Activated CD8-positive, alpha-beta T cell treated with anti-CD3 and anti-CD28 coated beads, Interleukin-2, amount 10 ng/mL, durations not matched to agents 7 days and 5 days (primary cell): ENCODE measurements at regions of chr6 and their contacts with region 1.

Region 1: GRCh38 chr6:36885461-36886401 is at the start of gene C6orf89:
- DNase-seq: peak; percentile 99
- ATAC-seq: peak; percentile 100
- H3K4me3 Mint-ChIP-seq: peak within 1 kb of the TSS; percentile 91
- H3K27ac Mint-ChIP-seq: peak within 1 kb of the TSS; percentile 87
- H3K4me1 Mint-ChIP-seq: peaks cover 35% of the 10 kb centered on the region
- H3K27me3 Mint-ChIP-seq: no peaks in the 10 kb centered on the region
- total RNA-seq, gene C6orf89: 40.0 to 41.1 TPM

Region 2: DNA sequence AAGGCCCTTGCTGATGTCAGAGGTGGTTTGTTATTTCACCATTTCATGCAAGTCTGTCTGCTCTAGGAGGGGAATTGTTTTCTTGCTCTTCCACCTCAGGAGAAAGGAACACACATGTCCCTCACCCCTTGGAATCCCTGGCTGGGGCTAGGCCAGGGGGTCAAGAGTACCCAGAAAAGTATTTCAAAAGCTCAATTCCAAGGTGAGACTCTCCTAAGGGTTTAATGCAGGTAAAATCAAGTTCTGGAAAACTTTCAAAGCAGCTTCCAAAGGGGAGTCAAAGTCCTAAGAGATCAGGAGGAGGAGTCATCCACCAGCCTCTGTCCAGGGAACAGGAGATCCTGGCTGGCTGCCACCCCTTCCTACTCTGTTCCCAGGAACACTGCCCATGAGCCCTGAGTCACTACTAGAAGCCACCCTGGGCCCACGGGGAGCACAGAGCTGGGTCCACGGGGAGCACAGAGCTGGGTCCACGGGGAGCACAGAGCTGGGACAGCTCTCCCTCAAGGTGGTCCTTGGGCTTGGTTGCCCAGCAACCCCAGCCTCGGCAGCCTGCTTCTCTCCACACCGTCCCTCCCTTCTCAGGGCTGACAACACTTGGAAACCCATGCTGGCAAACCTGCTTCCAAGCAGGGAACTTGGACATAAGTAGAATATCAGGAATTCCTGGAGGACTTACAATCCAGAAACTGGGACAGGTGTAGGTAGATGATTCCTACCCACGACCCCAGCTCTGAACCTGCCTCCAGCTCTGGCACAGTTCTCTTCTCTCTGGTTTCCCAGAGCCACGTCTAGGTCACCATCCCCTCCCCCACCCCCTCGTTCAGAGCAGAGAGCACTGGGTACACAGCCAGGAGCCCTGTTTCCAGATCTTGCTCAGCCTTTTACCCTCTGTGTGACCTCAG is 242.6 kb before region 1 on chr6:
- CTCF ChIA-PET with region 1: no interaction called
- POLR2A ChIA-PET with region 1: no interaction called
- DNase-seq: no peak
- ATAC-seq: no peak
- H3K4me3 Mint-ChIP-seq: no peak overlapping the region
- H3K27ac Mint-ChIP-seq: no peak overlapping the region
- H3K4me1 Mint-ChIP-seq: no peaks in the 10 kb centered on the region
- H3K27me3 Mint-ChIP-seq: peaks cover 5% of the 10 kb centered on the region

Region 3: GRCh38 chr6:36765594-36766398 is 119.9 kb before region 1 on chr6:
- CTCF ChIA-PET with region 1: interaction called, 19 read pairs
- POLR2A ChIA-PET with region 1: no interaction called
- DNase-seq: peak; percentile 90
- ATAC-seq: peak; percentile 90
- H3K4me3 Mint-ChIP-seq: no peak overlapping the region
- H3K27ac Mint-ChIP-seq: peak overlapping the region; percentile 14
- H3K4me1 Mint-ChIP-seq: peaks cover 49% of the 10 kb centered on the region
- H3K27me3 Mint-ChIP-seq: no peaks in the 10 kb centered on the region

Region 4: GRCh38 chr6:36897609-36898008 is 11.9 kb after region 1 on chr6:
- CTCF ChIA-PET with region 1: interaction called, 18 read pairs
- POLR2A ChIA-PET with region 1: no interaction called
- DNase-seq: peak; percentile 53
- ATAC-seq: peak; percentile 70
- H3K4me3 Mint-ChIP-seq: no peak overlapping the region
- H3K27ac Mint-ChIP-seq: no peak overlapping the region
- H3K4me1 Mint-ChIP-seq: peaks cover 7% of the 10 kb centered on the region
- H3K27me3 Mint-ChIP-seq: no peaks in the 10 kb centered on the region

Region 5: GRCh38 chr6:36927691-36928546 is 42.2 kb after region 1 on chr6:
- CTCF ChIA-PET with region 1: interaction called, 12 read pairs
- POLR2A ChIA-PET with region 1: no interaction called
- DNase-seq: no peak
- ATAC-seq: no peak
- H3K4me3 Mint-ChIP-seq: no peak overlapping the region
- H3K27ac Mint-ChIP-seq: no peak overlapping the region
- H3K4me1 Mint-ChIP-seq: peaks cover 33% of the 10 kb centered on the region
- H3K27me3 Mint-ChIP-seq: no peaks in the 10 kb centered on the region

Region 6: GRCh38 chr6:36979347-36979742 is 93.6 kb after region 1 on chr6:
- CTCF ChIA-PET with region 1: interaction called, 37 read pairs
- POLR2A ChIA-PET with region 1: interaction called, 4 read pairs
- DNase-seq: peak; percentile 67
- ATAC-seq: peak; percentile 67
- H3K4me3 Mint-ChIP-seq: no peak overlapping the region
- H3K27ac Mint-ChIP-seq: peak overlapping the region; percentile 31
- H3K4me1 Mint-ChIP-seq: peaks cover 34% of the 10 kb centered on the region
- H3K27me3 Mint-ChIP-seq: no peaks in the 10 kb centered on the region

Region 7: GRCh38 chr6:37207903-37208456 is 322.2 kb after region 1 on chr6:
- CTCF ChIA-PET with region 1: interaction called, 32 read pairs
- POLR2A ChIA-PET with region 1: no interaction called
- DNase-seq: peak; percentile 94
- ATAC-seq: peak; percentile 70
- H3K4me3 Mint-ChIP-seq: peak overlapping the region; percentile 45
- H3K27ac Mint-ChIP-seq: peak overlapping the region; percentile 87
- H3K4me1 Mint-ChIP-seq: peaks cover 79% of the 10 kb centered on the region
- H3K27me3 Mint-ChIP-seq: no peaks in the 10 kb centered on the region